ENCODE measurements at regions of chr6 and their contacts with region 1.

Region 1: DNA sequence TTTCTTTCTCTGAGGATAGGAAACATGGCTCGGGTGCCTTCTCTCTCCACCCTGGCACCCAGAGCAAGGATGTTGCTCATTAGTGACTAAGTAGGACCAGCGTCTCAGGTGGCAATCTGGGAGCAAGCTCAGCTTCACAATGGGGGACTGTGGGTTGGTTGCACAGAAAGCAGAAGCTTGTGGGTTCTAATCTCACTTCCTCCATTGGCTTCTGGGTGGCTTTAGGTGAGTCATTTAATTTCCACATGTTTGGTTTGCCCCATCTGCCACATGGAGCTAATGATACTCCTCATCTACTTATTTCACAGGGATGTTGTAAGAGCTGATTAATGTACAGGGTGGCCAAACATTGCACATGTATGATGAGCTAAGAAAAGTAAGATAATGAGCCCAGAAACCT is 54.8 kb upstream of the AKIRIN2 start:
- DNase-seq: peak; percentile 83
- ATAC-seq: peak; percentile 73
- H3K4me3 ChIP-seq: no peak overlapping the region
- H3K27ac ChIP-seq: peak overlapping the region; percentile 45; the same call in 1 of the 2 replicates
- H3K4me1 ChIP-seq: peaks cover 5% of the 10 kb centered on the region; the same call in 1 of the 2 replicates
- H3K27me3 ChIP-seq: no peaks in the 10 kb centered on the region
- CTCF ChIP-seq: no peak
- POLR2A ChIP-seq: no peak
- RAD21 ChIP-seq: no peak

Region 2: DNA sequence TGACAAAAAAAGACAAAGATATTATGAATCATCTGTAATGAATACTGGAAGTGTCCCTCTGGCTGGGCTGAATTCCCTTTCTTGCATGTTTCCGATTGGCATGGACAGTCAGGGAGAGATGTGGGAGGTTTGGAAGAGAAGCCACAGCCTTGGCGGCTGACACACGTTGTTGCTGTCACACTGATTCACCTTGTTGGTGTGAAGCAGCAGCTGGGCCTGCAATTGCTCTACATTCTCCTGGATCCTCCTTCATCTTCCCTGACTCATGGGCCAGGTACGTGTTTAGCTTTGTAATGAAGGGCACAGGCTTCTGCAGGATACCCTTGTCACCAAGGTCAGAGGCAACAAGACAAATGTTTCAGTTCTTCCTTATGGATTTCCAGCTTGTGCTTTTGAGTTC is 447.9 kb before region 1 on chr6:
- CTCF ChIA-PET with region 1: no interaction called
- POLR2A ChIA-PET with region 1: no interaction called
- dilution Hi-C with region 1: no loop called
- in situ Hi-C with region 1: no loop called
- intact Hi-C with region 1: no loop called
- DNase-seq: peak; percentile 4
- ATAC-seq: no peak
- H3K4me3 ChIP-seq: no peak overlapping the region
- H3K27ac ChIP-seq: no peak overlapping the region
- H3K4me1 ChIP-seq: no peaks in the 10 kb centered on the region
- H3K27me3 ChIP-seq: peaks cover 8% of the 10 kb centered on the region
- CTCF ChIP-seq: no peak
- POLR2A ChIP-seq: no peak
- RAD21 ChIP-seq: no peak

Region 3: GRCh38 chr6:87832025-87832825 is 75.4 kb after region 1 on chr6:
- CTCF ChIA-PET with region 1: no interaction called
- POLR2A ChIA-PET with region 1: no interaction called
- dilution Hi-C with region 1: no loop called
- in situ Hi-C with region 1: no loop called
- intact Hi-C with region 1: no loop called
- DNase-seq: peak; percentile 30
- ATAC-seq: peak; percentile 84
- H3K4me3 ChIP-seq: peak overlapping the region; percentile 61
- H3K27ac ChIP-seq: no peak overlapping the region
- H3K4me1 ChIP-seq: no peaks in the 10 kb centered on the region
- H3K27me3 ChIP-seq: no peaks in the 10 kb centered on the region
- CTCF ChIP-seq: peak; percentile 49
- POLR2A ChIP-seq: no peak
- RAD21 ChIP-seq: peak; percentile 26; the same call in 1 of the 2 replicates

Region 4: DNA sequence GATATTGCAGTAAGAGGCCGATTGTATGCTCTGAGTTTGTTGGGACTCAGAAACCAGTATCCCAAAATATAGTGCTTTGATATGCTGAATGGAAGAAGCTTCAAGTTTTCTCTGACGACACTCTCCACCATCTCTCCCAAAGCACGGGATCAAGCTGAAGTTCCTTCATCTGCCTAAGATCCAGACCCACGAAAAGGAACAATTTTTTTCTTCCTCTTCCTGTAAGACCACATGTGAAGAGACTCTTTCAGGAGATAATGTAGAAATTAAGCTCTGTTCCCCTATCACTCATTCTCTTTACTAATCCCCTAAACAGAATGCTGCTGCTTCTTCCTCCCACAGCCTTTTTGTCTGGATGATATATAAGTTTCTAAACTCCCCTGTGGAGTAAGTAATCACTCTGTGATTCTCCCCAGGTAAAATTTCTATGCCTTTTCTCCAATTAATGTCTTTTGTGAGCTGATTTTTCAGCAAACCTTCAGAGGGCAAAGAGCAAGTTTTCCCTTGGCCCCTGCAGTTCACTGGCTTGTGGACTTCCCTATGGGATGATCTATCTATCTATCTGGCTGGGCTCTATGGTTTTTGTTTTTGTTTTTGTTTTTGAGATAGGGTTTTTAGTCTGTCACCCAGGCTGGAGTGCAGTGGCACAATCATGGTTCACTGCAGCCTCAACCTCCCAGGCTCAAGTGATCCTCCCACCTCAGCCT is 1310.2 kb after region 1 on chr6:
- CTCF ChIA-PET with region 1: no interaction called
- POLR2A ChIA-PET with region 1: interaction called, 10 read pairs
- dilution Hi-C with region 1: no loop called
- in situ Hi-C with region 1: no loop called
- intact Hi-C with region 1: no loop called
- DNase-seq: no peak
- ATAC-seq: no peak
- H3K4me3 ChIP-seq: no peak overlapping the region
- H3K27ac ChIP-seq: no peak overlapping the region
- H3K4me1 ChIP-seq: no peaks in the 10 kb centered on the region
- H3K27me3 ChIP-seq: peaks cover 5% of the 10 kb centered on the region; the same call in 1 of the 2 replicates
- CTCF ChIP-seq: no peak
- POLR2A ChIP-seq: no peak
- RAD21 ChIP-seq: no peak